ENCODE measurements at regions of chr2 and their contacts with region 1.

Region 1: GRCh38 chr2:162890690-162891311 is 52.2 kb upstream of the KCNH7 start:
- DNase-seq: no peak

Region 2: GRCh38 chr2:163132850-163133249 is 242.0 kb after region 1 on chr2:
- intact Hi-C with region 1: loop called (anchors 10 kb)
- DNase-seq: no peak

Region 3: DNA sequence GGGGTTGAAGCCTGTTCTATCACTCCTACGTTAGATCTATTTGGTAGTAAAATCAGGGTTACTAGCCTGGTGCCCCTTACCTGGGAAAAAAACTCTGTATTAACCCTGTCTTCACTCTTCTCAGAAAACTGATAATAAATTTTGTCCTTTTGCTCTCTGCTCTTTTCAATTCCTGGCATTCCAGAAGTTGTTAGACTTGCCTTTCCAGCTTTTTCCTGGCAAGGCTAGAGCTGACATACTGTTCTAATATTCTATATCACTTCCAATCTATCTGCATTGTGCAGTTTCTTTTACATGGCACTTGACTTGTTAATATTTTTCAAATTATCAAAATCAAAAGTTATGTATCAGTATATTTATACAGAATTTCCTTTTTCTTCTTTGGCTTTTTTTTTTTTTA is 682.9 kb after region 1 on chr2:
- intact Hi-C with region 1: no loop called
- DNase-seq: no peak